WTC11 (cell line): ENCODE measurements at regions of chr6 and their contacts with region 1.

Region 1: DNA sequence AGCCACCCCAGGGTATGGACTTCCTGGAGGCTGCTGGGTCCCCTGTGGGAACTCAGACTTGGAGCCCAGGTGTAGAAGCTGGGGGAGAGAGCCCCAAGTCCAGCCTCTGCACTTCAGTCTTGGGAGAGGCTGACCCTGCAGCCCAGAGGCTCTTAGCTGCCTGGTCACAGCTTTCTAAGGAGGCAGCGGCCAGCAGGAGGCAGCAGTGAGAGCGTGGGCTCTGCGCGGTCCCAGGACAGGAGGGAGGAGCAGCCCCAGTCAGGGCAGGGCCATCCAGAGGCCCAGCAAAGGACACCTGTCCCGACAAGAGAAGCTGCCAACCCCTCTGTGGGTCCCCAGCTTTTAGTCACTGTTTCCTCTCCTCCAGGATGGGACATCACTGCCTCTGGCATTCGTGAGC is 9.4 kb downstream of the TREML2 start:
- DNase-seq: peak; percentile 81
- ATAC-seq: peak; percentile 98
- H3K4me3 Mint-ChIP-seq: no peak overlapping the region
- H3K27ac Mint-ChIP-seq: no peak overlapping the region
- H3K4me1 Mint-ChIP-seq: peaks cover 1% of the 10 kb centered on the region
- H3K27me3 Mint-ChIP-seq: peaks cover 5% of the 10 kb centered on the region
- CTCF ChIP-seq: peak; percentile 79

Region 2: GRCh38 chr6:41100871-41101287 is 90.7 kb before region 1 on chr6:
- CTCF ChIA-PET with region 1: interaction called, 22 read pairs
- POLR2A ChIA-PET with region 1: no interaction called
- DNase-seq: peak; percentile 94
- ATAC-seq: peak; percentile 98
- H3K4me3 Mint-ChIP-seq: peak overlapping the region; percentile 48
- H3K27ac Mint-ChIP-seq: peak overlapping the region; percentile 80; the same call in 1 of the 2 replicates
- H3K4me1 Mint-ChIP-seq: peaks cover 18% of the 10 kb centered on the region
- H3K27me3 Mint-ChIP-seq: peaks cover 6% of the 10 kb centered on the region; the same call in 1 of the 2 replicates
- CTCF ChIP-seq: no peak

Region 3: GRCh38 chr6:41167173-41167963 is 24.2 kb before region 1 on chr6:
- CTCF ChIA-PET with region 1: interaction called, 10 read pairs
- POLR2A ChIA-PET with region 1: no interaction called
- DNase-seq: peak; percentile 71
- ATAC-seq: peak; percentile 57
- H3K4me3 Mint-ChIP-seq: no peak overlapping the region
- H3K27ac Mint-ChIP-seq: no peak overlapping the region
- H3K4me1 Mint-ChIP-seq: peaks cover 16% of the 10 kb centered on the region
- H3K27me3 Mint-ChIP-seq: no peaks in the 10 kb centered on the region; the same call in 1 of the 2 replicates
- CTCF ChIP-seq: no peak

Region 4: GRCh38 chr6:41176189-41176588 is 15.4 kb before region 1 on chr6:
- CTCF ChIA-PET with region 1: interaction called, 77 read pairs
- POLR2A ChIA-PET with region 1: no interaction called
- DNase-seq: no peak
- ATAC-seq: no peak
- H3K4me3 Mint-ChIP-seq: no peak overlapping the region
- H3K27ac Mint-ChIP-seq: no peak overlapping the region
- H3K4me1 Mint-ChIP-seq: peaks cover 6% of the 10 kb centered on the region
- H3K27me3 Mint-ChIP-seq: no peaks in the 10 kb centered on the region
- CTCF ChIP-seq: no peak

Region 5: GRCh38 chr6:41278699-41279405 is 87.3 kb after region 1 on chr6:
- CTCF ChIA-PET with region 1: interaction called, 16 read pairs
- POLR2A ChIA-PET with region 1: no interaction called
- DNase-seq: peak; percentile 80
- ATAC-seq: peak; percentile 99
- H3K4me3 Mint-ChIP-seq: 0 out of 2 replicates have a peak overlapping the region, but pooled peaks have one; percentile 9
- H3K27ac Mint-ChIP-seq: no peak overlapping the region
- H3K4me1 Mint-ChIP-seq: peaks cover 10% of the 10 kb centered on the region
- H3K27me3 Mint-ChIP-seq: peaks cover 10% of the 10 kb centered on the region
- CTCF ChIP-seq: peak; percentile 47; the same call in 1 of the 2 replicates

Region 6: DNA sequence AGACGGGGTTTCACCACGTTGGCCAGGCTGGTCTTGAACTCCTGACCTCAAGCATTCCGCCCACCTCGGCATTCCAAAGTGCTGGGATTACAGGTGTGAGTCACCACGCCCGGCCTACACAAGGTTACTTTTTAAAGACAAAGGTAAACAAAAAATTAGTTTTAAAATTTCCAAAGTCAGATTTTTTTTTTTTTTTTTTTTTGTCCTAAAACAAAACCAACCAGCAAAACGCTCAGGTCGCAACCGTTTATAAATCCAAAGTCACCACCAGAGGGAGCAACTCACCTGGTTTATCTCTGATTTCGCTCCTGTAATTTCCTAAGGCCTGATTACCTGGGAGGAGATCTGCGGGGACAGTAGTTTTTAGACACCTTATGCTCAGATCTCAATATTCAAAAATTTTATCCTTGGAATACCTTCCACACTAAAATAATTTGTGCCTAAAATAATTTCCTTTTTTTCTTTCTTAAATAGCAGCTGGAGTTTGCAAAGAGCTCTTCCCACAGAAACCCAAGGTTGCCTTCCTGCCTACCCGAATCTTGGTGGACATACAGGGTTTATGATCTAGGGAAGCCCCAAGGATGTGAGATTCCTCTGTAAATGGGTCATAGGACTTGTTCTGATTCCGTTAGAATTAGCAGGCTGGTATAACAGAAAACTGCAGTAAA is 114.8 kb after region 1 on chr6:
- CTCF ChIA-PET with region 1: interaction called, 11 read pairs
- POLR2A ChIA-PET with region 1: no interaction called
- DNase-seq: peak; percentile 53
- ATAC-seq: peak; percentile 71
- H3K4me3 Mint-ChIP-seq: no peak overlapping the region
- H3K27ac Mint-ChIP-seq: no peak overlapping the region
- H3K4me1 Mint-ChIP-seq: peaks cover 15% of the 10 kb centered on the region
- H3K27me3 Mint-ChIP-seq: peaks cover 6% of the 10 kb centered on the region; the same call in 1 of the 2 replicates
- CTCF ChIP-seq: peak; percentile 69

Region 7: GRCh38 chr6:41318654-41319565 is 127.3 kb after region 1 on chr6:
- CTCF ChIA-PET with region 1: interaction called, 25 read pairs
- POLR2A ChIA-PET with region 1: no interaction called
- DNase-seq: peak; percentile 85
- ATAC-seq: peak; percentile 96
- H3K4me3 Mint-ChIP-seq: peak overlapping the region; percentile 58
- H3K27ac Mint-ChIP-seq: no peak overlapping the region
- H3K4me1 Mint-ChIP-seq: peaks cover 20% of the 10 kb centered on the region
- H3K27me3 Mint-ChIP-seq: peaks cover 15% of the 10 kb centered on the region
- CTCF ChIP-seq: peak; percentile 100